Caco-2 (cell line): ENCODE measurements at regions of chr15 and their contacts with region 1.

Region 1: GRCh38 chr15:35519541-35520149 is 26.3 kb downstream of the DPH6 start:
- DNase-seq: peak in 1 of 2 experiments; percentile 25
- H3K4me3 ChIP-seq: no peak overlapping the region
- H3K4me3 Mint-ChIP-seq: no peak overlapping the region
- H3K27ac Mint-ChIP-seq: no peak overlapping the region
- H3K4me1 ChIP-seq: no peaks in the 10 kb centered on the region; the same call in 1 of the 2 replicates
- H3K4me1 Mint-ChIP-seq: peaks cover 9% of the 10 kb centered on the region
- H3K27me3 ChIP-seq: no peaks in the 10 kb centered on the region
- H3K27me3 Mint-ChIP-seq: no peaks in the 10 kb centered on the region
- CTCF ChIP-seq: peak; percentile 30 to 58

Region 2: GRCh38 chr15:35458176-35458856 is 61.3 kb before region 1 on chr15:
- CTCF ChIA-PET with region 1: no interaction called
- POLR2A ChIA-PET with region 1: no interaction called
- intact Hi-C with region 1: no loop called
- DNase-seq: no peak
- H3K4me3 ChIP-seq: no peak overlapping the region
- H3K4me3 Mint-ChIP-seq: no peak overlapping the region
- H3K27ac Mint-ChIP-seq: no peak overlapping the region
- H3K4me1 ChIP-seq: no peaks in the 10 kb centered on the region
- H3K4me1 Mint-ChIP-seq: no peaks in the 10 kb centered on the region
- H3K27me3 ChIP-seq: no peaks in the 10 kb centered on the region
- H3K27me3 Mint-ChIP-seq: no peaks in the 10 kb centered on the region
- CTCF ChIP-seq: no peak

Region 3: GRCh38 chr15:35545824-35546510 is 26.3 kb after region 1 on chr15 and contains the start of gene DPH6:
- CTCF ChIA-PET with region 1: no interaction called
- POLR2A ChIA-PET with region 1: no interaction called
- intact Hi-C with region 1: loop called (anchors 1 kb)
- DNase-seq: peak; percentile 89 to 90
- H3K4me3 ChIP-seq: peak within 1 kb of the TSS; percentile 48
- H3K4me3 Mint-ChIP-seq: peak within 1 kb of the TSS; percentile 92
- H3K27ac Mint-ChIP-seq: peak within 1 kb of the TSS; percentile 96
- H3K4me1 ChIP-seq: peaks cover 6% of the 10 kb centered on the region; the same call in 1 of the 2 replicates
- H3K4me1 Mint-ChIP-seq: peaks cover 12% of the 10 kb centered on the region
- H3K27me3 ChIP-seq: no peaks in the 10 kb centered on the region
- H3K27me3 Mint-ChIP-seq: no peaks in the 10 kb centered on the region
- CTCF ChIP-seq: peak in 1 of 2 experiments; percentile 11
- total RNA-seq, gene DPH6: 24.0 and 27.1 TPM in 2 replicates

Region 4: DNA sequence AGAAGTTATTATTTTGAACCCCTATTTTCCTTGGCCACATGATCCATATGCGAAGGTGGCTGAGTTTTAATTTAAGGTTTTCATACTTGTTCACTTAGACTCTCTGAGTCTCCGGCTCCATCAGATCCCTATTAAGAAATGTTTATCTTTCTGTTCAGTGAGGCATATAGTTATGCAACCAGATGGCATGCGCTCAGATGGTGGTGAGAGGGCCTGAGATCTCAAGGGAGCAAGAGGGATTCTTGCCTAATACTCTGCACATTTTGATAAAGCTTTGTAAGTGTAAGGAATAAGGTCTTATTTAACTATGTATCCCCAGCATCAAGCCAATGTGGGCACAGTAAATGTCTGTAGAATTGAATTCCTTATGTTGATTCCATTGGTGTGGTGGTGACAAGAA is 105.2 kb after region 1 on chr15:
- CTCF ChIA-PET with region 1: no interaction called
- POLR2A ChIA-PET with region 1: no interaction called
- intact Hi-C with region 1: loop called (anchors 10 kb)
- DNase-seq: peak in 1 of 2 experiments; percentile 9
- H3K4me3 ChIP-seq: no peak overlapping the region
- H3K4me3 Mint-ChIP-seq: no peak overlapping the region
- H3K27ac Mint-ChIP-seq: no peak overlapping the region
- H3K4me1 ChIP-seq: peaks cover 1% of the 10 kb centered on the region; the same call in 1 of the 2 replicates
- H3K4me1 Mint-ChIP-seq: peaks cover 9% of the 10 kb centered on the region
- H3K27me3 ChIP-seq: no peaks in the 10 kb centered on the region
- H3K27me3 Mint-ChIP-seq: no peaks in the 10 kb centered on the region
- CTCF ChIP-seq: no peak